Naive thymus-derived CD4-positive, alpha-beta T cell (primary cell): ENCODE measurements at regions of chr20 and their contacts with region 1.

Region 1: GRCh38 chr20:63009045-63009961 is 2.5 kb upstream of the BHLHE23 start:
- DNase-seq: peak; percentile 65 to 91 (median 80)
- ATAC-seq: peak; percentile 82
- H3K4me3 ChIP-seq: peak overlapping the region; percentile 54
- H3K4me3 Mint-ChIP-seq: peak overlapping the region; percentile 59 to 98 (median 86)
- H3K27ac ChIP-seq: no peak overlapping the region
- H3K27ac Mint-ChIP-seq: peak overlapping the region in 4 of 9 donors; percentile 21 to 95 (median 79)
- H3K4me1 ChIP-seq: peaks cover 11 to 37% of the 10 kb centered on the region in 2 donors
- H3K4me1 Mint-ChIP-seq: peaks cover 4 to 33% (median 21%) of the 10 kb centered on the region in 7 donors
- H3K27me3 ChIP-seq: peaks cover 19% of the 10 kb centered on the region in 2 donors
- H3K27me3 Mint-ChIP-seq: peaks cover 19 to 78% (median 39%) of the 10 kb centered on the region in 5 donors

Region 2: GRCh38 chr20:62808211-62808865 is 201.0 kb before region 1 on chr20:
- CTCF ChIA-PET with region 1: interaction called, 3 read pairs
- POLR2A ChIA-PET with region 1: no interaction called
- intact Hi-C with region 1: loop called in 1 of 2 experiments (anchors 5 kb)
- DNase-seq: peak; percentile 58 to 84 (median 71)
- ATAC-seq: peak; percentile 70
- H3K4me3 ChIP-seq: no peak overlapping the region
- H3K4me3 Mint-ChIP-seq: peak overlapping the region in 9 of 10 donors; percentile 18 to 82 (median 57)
- H3K27ac ChIP-seq: peak overlapping the region; percentile 22
- H3K27ac Mint-ChIP-seq: peak overlapping the region in 7 of 9 donors; percentile 13 to 88 (median 65)
- H3K4me1 ChIP-seq: peaks cover 16 to 30% of the 10 kb centered on the region in 2 donors
- H3K4me1 Mint-ChIP-seq: peaks cover 16 to 33% (median 25%) of the 10 kb centered on the region in 7 donors
- H3K27me3 ChIP-seq: no peaks in the 10 kb centered on the region
- H3K27me3 Mint-ChIP-seq: no peaks in the 10 kb centered on the region

Region 3: GRCh38 chr20:62872184-62872847 is 137.0 kb before region 1 on chr20:
- CTCF ChIA-PET with region 1: interaction called, 5 read pairs
- POLR2A ChIA-PET with region 1: no interaction called
- intact Hi-C with region 1: loop called (anchors 1 to 2 kb)
- DNase-seq: no peak
- ATAC-seq: no peak
- H3K4me3 ChIP-seq: no peak overlapping the region
- H3K4me3 Mint-ChIP-seq: no peak overlapping the region
- H3K27ac ChIP-seq: no peak overlapping the region
- H3K27ac Mint-ChIP-seq: no peak overlapping the region
- H3K4me1 ChIP-seq: peaks cover 0 to 6% of the 10 kb centered on the region in 2 donors
- H3K4me1 Mint-ChIP-seq: peaks cover 7 to 36% (median 21%) of the 10 kb centered on the region in 7 donors
- H3K27me3 ChIP-seq: no peaks in the 10 kb centered on the region
- H3K27me3 Mint-ChIP-seq: peaks cover 0 to 9% (median 0%) of the 10 kb centered on the region in 5 donors

Region 4: DNA sequence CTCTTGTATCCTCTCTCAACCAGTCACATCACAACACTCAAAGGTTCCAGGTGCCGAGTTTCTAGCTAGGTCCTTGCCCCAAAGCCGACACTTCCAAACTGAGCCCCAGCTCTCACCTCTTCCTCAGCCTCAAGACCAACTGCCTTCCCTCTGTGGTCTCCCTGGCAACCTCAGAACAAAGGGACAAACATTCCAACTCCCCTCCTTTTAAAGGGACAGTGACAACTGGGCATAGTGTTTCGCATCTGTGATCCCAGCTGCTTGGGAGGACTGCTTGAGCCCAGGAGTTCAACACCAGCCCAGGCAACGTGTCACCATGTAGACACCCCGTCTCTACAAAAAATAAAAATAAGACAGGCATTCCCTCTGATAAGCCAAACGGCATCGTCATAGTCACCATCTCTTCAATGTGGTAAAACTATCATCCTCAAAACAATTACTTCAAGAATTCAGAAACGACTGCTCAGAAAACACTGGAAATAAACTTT is 94.3 kb before region 1 on chr20:
- CTCF ChIA-PET with region 1: interaction called, 6 read pairs
- POLR2A ChIA-PET with region 1: interaction called, 3 read pairs
- intact Hi-C with region 1: loop called in 1 of 2 experiments (anchors 5 kb)
- DNase-seq: peak in 3 of 9 donors; percentile 32 to 41 (median 37)
- ATAC-seq: peak; percentile 48
- H3K4me3 ChIP-seq: no peak overlapping the region
- H3K4me3 Mint-ChIP-seq: peak overlapping the region; percentile 15 to 90 (median 72)
- H3K27ac ChIP-seq: peak overlapping the region; percentile 57
- H3K27ac Mint-ChIP-seq: peak overlapping the region; percentile 51 to 91 (median 82)
- H3K4me1 ChIP-seq: peaks cover 53 to 55% of the 10 kb centered on the region in 2 donors
- H3K4me1 Mint-ChIP-seq: peaks cover 54 to 90% (median 82%) of the 10 kb centered on the region in 7 donors
- H3K27me3 ChIP-seq: no peaks in the 10 kb centered on the region
- H3K27me3 Mint-ChIP-seq: no peaks in the 10 kb centered on the region

Region 5: DNA sequence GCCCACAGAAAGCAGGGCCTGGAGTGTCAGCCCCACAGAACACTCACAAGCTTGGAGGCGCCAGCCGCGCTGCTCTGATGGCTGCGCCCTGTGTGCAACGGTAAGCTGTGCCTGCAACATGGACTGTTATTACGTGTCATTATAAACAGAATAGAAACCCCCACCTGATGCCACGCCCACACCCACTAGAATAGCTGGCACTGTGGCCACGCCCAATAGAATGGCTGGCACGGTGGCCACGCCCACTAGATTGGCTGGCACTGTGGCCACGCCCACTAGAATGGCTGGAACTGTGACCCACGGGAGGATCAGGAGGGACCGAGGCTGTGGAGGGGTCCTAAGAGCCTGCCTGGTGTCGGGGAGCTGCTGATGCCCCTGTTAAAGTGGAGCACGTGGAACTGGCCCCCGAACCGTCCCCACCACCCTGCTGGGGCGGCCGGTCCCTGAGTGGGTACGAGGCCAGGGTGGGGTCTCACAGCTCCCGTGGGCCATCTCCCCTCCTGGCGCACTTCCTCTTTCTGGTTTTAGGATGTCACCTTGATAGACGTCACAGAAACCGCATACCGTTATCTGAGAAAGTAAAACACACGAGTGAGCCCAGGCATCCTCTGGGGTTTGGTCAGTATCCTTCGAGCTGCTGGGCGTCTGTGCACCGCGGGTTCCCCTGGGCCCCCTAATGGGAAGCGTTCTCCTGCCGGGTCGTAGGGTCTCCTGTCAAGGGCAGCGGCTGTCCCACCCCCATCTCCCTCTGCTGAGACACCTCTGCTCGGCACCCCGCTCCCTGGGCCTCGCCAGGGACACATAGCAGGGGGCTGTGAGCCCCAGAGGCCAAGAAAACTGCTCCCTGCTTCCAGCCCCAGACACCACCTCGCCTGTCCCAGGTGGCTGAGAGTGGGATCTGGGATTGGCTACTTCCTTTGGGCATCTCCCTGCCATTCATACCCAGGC is 31.4 kb before region 1 on chr20:
- CTCF ChIA-PET with region 1: interaction called, 15 read pairs
- POLR2A ChIA-PET with region 1: interaction called, 9 read pairs
- intact Hi-C with region 1: no loop called
- DNase-seq: peak; percentile 48 to 91 (median 75)
- ATAC-seq: peak; percentile 87
- H3K4me3 ChIP-seq: peak overlapping the region; percentile 57
- H3K4me3 Mint-ChIP-seq: peak overlapping the region; percentile 64 to 83 (median 74)
- H3K27ac ChIP-seq: no peak overlapping the region
- H3K27ac Mint-ChIP-seq: peak overlapping the region in 7 of 9 donors; percentile 69 to 93 (median 79)
- H3K4me1 ChIP-seq: peaks cover 31 to 50% of the 10 kb centered on the region in 2 donors
- H3K4me1 Mint-ChIP-seq: peaks cover 16 to 51% (median 29%) of the 10 kb centered on the region in 7 donors
- H3K27me3 ChIP-seq: peaks cover 11 to 28% of the 10 kb centered on the region in 2 donors
- H3K27me3 Mint-ChIP-seq: peaks cover 16 to 73% (median 44%) of the 10 kb centered on the region in 5 donors

Region 6: DNA sequence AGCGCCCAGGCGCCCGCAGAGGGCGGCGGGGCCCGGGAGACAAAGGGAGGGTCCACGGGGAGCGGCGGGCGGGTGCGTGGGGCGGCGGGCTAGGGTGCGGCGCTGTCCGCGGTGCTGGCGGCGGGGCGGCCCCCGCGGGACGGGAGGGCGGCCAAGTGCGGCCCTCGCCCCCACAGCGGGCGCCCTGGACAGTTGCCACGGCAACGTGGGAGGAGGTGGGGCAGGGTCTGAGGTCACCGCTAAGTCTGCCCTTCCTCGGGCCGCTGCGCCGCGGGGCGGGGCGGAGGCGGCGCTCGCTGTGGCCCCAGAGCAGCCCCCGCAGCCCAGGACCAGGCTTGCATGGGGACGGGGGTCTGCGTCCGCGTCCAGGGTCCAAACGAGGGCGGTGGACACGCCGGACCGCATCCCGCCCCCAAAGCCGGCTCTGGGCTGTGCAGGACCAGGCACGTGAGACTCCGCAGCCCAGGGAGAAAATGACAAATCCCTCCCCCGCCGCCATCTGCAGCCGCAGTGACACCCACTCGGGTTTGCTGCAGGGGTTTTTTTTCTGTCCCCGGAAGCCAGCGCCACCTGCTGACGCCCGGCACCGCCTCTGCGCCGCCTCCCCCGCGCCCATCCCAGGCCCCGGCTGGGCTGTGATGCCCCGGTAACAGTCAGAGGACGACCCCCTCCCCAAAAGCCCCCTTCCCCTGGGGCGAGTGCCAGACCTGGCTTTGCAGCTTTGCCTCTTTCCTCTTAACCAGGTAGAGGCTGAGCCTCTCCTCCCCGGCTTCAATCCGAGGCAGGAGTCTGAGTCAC is 169.8 kb after region 1 on chr20:
- CTCF ChIA-PET with region 1: no interaction called
- POLR2A ChIA-PET with region 1: no interaction called
- intact Hi-C with region 1: loop called in 1 of 2 experiments (anchors 2 kb)
- DNase-seq: peak; percentile 48 to 71 (median 67)
- ATAC-seq: peak; percentile 80
- H3K4me3 ChIP-seq: peak overlapping the region; percentile 33
- H3K4me3 Mint-ChIP-seq: peak overlapping the region in 8 of 10 donors; percentile 23 to 78 (median 66)
- H3K27ac ChIP-seq: no peak overlapping the region
- H3K27ac Mint-ChIP-seq: peak overlapping the region in 2 of 9 donors; percentile 14 to 76
- H3K4me1 ChIP-seq: peaks cover 0 to 6% of the 10 kb centered on the region in 2 donors
- H3K4me1 Mint-ChIP-seq: peaks cover 0 to 17% (median 8%) of the 10 kb centered on the region in 7 donors
- H3K27me3 ChIP-seq: peaks cover 3 to 16% of the 10 kb centered on the region in 2 donors
- H3K27me3 Mint-ChIP-seq: peaks cover 10 to 50% (median 33%) of the 10 kb centered on the region in 5 donors